HepG2 (cell line): ENCODE measurements at regions of chr2 and their contacts with region 1.

Region 1: GRCh38 chr2:241803387-241804325 is 5.3 kb upstream of the NEU4 start:
- DNase-seq: no peak
- ATAC-seq: no peak
- H3K4me3 ChIP-seq: no peak overlapping the region
- H3K27ac ChIP-seq: no peak overlapping the region
- H3K4me1 ChIP-seq: peaks cover 29% of the 10 kb centered on the region
- H3K27me3 ChIP-seq: no peaks in the 10 kb centered on the region; a peak in 1 of 5 replicates
- CTCF ChIP-seq: no peak
- EP300 ChIP-seq: no peak
- POLR2A ChIP-seq: no peak
- RAD21 ChIP-seq: no peak

Region 2: DNA sequence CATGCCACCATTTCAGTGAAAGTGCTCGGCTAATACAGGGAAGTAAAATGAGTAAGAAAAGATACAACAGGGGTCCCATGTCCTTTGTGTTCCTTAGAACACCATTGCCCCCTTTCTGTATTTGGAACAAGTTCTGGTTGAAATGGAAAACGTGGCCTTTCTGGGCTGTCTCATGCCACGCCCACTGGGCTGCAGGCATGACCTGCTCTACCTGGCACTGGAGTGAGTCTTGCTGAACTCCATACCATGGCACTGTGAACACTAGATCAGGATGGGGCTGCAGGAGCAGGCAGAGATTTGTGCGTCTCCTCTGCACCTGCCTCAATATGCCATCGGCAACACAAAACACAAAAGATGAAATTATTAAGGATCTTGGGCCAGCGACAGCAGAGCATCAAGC is 978.8 kb before region 1 on chr2:
- CTCF ChIA-PET with region 1: no interaction called
- POLR2A ChIA-PET with region 1: no interaction called
- in situ Hi-C with region 1: no loop called
- intact Hi-C with region 1: loop called (anchors 5 kb)
- DNase-seq: no peak
- ATAC-seq: no peak
- H3K4me3 ChIP-seq: no peak overlapping the region
- H3K27ac ChIP-seq: no peak overlapping the region
- H3K4me1 ChIP-seq: no peaks in the 10 kb centered on the region
- H3K27me3 ChIP-seq: peaks cover 14 to 90% of the 10 kb centered on the region in 2 experiments; a peak in 4 of 5 replicates
- CTCF ChIP-seq: no peak
- EP300 ChIP-seq: no peak
- POLR2A ChIP-seq: no peak
- RAD21 ChIP-seq: no peak

Region 3: DNA sequence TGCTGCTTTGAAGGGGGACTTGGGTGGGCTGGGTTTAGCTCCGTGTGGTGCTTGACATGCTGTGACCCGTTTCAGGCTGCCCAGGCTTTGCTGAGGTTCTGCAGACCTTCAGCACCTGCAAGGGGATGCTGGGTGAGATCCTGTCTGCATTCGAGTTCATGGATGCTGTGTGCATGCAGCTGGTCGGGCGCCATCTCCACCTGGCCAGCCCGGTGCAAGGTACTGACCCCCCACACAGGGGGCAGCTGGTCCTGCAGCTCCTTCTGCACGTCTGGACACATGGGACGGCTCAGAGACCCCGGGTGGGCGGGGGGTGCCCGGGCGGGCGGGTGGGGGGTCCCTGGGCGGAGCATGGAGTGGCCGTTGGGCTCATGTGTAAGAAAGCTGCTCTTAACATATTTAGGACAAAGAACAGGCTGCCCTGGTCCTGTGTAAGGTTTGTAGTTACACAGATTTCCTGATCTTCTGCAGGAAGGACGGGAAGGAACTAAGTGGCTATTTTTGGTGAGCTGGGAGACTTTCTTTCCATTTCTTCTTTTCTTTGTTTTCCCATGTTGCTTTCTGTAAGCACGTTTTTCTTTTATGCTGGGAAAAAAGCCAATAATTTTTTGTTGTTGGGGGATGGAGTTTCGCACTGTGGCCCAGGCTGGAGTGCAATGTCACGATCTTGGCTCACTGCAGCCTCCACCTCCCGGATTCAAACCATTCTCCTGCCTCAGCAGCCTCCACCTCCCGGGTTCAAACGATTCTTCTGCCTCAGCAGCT is 53.4 kb before region 1 on chr2:
- CTCF ChIA-PET with region 1: no interaction called
- POLR2A ChIA-PET with region 1: no interaction called
- in situ Hi-C with region 1: no loop called
- intact Hi-C with region 1: no loop called
- DNase-seq: no peak
- ATAC-seq: no peak
- H3K4me3 ChIP-seq: no peak overlapping the region
- H3K27ac ChIP-seq: no peak overlapping the region
- H3K4me1 ChIP-seq: no peaks in the 10 kb centered on the region
- H3K27me3 ChIP-seq: no peaks in the 10 kb centered on the region
- CTCF ChIP-seq: no peak
- EP300 ChIP-seq: no peak
- POLR2A ChIP-seq: no peak
- RAD21 ChIP-seq: no peak

Region 4: DNA sequence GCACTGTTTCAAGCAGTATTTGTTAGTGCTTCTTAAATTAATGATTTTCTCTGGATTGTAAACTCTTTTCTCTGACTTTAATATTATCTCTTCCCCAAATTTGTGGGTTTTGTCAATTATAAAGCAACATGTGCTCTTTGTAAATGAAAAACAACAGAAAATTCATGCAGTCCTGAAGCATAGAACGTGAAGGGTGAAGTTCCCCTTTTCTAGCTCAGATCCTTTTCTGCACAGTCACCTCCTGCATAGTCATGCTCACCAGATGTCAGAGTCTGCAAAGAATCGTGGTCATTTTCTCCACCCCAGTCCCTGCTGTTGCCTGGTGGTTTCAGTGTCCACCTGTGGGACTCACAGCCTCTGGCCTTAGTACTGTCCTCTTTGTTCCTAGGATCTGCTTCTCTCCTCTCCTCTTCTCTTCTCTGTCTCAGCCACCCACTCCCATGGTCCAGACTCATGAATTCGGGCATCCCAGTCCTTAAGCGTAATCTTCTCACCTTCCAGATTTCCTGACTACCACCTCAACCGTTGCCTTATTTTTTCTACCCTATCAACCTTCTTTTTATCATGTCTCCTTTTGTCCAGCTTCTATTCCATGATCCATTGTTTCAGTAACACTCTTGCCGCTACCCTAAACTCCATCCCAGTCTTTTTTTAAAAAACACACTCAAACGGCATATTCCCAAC is 294.9 kb after region 1 on chr2:
- CTCF ChIA-PET with region 1: no interaction called
- POLR2A ChIA-PET with region 1: no interaction called
- in situ Hi-C with region 1: no loop called
- intact Hi-C with region 1: no loop called
- DNase-seq: no peak
- ATAC-seq: no peak
- H3K4me3 ChIP-seq: no peak overlapping the region
- H3K27ac ChIP-seq: no peak overlapping the region
- H3K4me1 ChIP-seq: no peaks in the 10 kb centered on the region
- H3K27me3 ChIP-seq: no peaks in the 10 kb centered on the region
- CTCF ChIP-seq: no peak
- EP300 ChIP-seq: no peak
- POLR2A ChIP-seq: no peak
- RAD21 ChIP-seq: no peak